T-cell (primary cell): ENCODE measurements at regions of chr17 and their contacts with region 1.

Region 1: DNA sequence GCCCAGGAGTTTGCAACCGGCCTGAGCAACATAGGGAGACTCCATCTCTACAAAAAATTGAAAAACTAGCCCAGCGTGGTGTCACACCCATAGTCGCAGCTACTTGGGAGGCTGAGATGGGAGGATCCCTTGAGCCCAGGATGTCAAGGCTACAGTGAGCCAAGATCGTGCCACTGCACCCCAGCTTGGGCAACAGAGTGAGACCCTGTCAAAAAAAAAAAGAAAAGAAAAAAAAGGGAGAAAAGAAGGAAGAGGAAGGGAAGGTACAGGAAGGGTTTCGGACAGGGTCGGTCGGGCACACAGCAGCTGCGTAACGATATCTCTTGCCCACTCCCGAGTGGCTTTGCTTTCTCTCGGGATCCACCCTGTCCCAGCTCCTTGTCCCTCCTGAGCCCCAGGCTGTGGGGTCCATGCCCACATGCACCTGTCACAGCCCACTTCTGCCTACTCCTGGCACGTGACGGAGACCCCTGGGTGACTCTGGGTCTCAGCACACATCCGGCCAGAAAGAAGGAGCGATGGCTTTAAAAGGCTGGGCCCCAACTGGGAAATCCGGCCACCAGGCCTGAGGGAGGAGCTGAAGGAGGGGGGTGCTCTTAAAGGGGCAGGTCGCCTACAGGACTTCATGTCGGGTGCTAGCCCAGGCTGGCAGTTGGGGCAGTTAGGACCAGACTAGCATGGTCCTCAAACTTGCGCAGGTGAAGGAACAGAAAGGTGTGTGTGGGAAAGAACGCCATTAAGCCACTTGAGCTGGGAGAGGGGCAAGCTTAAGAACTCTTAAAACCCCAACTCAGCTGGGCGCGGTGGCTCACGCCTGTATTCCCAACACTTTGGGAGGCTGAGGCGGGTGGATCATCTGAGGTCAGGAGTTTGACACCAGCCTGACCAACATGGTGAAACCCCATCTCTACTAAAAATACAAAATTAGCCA is at the start of gene GHDC:
- DNase-seq: peak; percentile 57 to 82 (median 69)
- ATAC-seq: peak; percentile 90 to 98 (median 94)
- H3K4me3 ChIP-seq: peak within 1 kb of the TSS; percentile 94 to 97
- H3K4me3 Mint-ChIP-seq: peak within 1 kb of the TSS; percentile 94 to 95 (median 94)
- H3K27ac ChIP-seq: peak within 1 kb of the TSS; percentile 69
- H3K27ac Mint-ChIP-seq: peak within 1 kb of the TSS; percentile 91 to 92
- H3K4me1 ChIP-seq: peaks cover 2 to 29% of the 10 kb centered on the region in 2 experiments
- H3K4me1 Mint-ChIP-seq: peaks cover 26 to 31% (median 31%) of the 10 kb centered on the region in 3 donors
- H3K27me3 ChIP-seq: no peaks in the 10 kb centered on the region
- H3K27me3 Mint-ChIP-seq: no peaks in the 10 kb centered on the region
- total RNA-seq, gene GHDC: 15.8 to 26.2 (median 22.5) TPM

Region 2: DNA sequence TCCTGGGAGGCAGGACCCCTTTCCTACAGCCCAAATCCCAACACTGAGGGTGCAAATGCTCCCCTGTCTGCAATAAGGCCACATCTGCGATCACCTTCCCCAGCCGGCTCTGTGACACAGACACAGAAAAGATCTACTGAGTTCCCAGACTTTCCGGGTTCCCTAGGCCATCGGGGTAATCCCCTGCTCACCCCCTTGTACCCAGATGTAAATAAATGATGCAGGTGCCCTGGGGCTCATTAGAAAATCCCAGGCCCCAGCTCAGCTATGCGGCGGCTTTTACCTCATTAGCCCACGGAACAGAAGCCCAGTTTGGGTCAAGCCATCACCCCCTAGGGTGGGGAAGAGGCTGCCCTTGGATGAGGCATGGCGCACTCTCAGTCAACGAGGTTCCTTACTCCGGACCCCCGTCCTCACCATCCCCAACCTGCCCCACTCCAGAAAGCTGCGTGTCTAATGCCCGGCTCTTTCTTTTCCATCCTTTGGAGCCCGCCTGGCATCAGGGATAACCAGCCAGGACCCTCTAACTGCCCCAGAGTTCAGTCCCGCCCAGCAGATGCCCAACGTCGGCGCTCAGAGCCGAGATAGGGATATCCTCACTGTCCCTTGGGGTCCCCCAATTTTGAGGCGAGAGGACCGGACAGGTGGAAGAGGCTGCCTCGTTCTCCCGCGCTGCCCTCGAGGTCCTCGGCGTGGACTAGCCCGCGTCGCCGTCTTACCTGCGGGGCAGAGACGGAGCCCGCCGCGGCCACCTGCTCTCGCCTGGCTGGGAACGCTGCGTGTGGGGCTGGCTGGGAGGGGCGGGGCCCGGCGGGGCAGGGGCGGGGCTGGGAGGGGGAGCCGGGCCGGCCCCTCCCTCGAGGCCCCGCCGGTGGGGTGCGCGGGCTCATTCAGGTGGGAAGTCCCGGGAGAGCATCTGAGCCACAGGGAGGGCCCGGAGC is 96.3 kb before region 1 on chr17 and contains the start of gene ZNF385C:
- CTCF ChIA-PET with region 1: no interaction called
- POLR2A ChIA-PET with region 1: no interaction called
- DNase-seq: peak in 21 of 35 experiments; percentile 23 to 66 (median 38)
- ATAC-seq: peak; percentile 80 to 91 (median 87)
- H3K4me3 ChIP-seq: peak within 1 kb of the TSS; percentile 33 to 46
- H3K4me3 Mint-ChIP-seq: peak within 1 kb of the TSS; percentile 50 to 66 (median 52)
- H3K27ac ChIP-seq: no peak within 1 kb of the TSS
- H3K27ac Mint-ChIP-seq: no peak within 1 kb of the TSS
- H3K4me1 ChIP-seq: peaks cover 6 to 16% of the 10 kb centered on the region in 2 experiments
- H3K4me1 Mint-ChIP-seq: peaks cover 6 to 10% (median 9%) of the 10 kb centered on the region in 3 donors
- H3K27me3 ChIP-seq: peaks cover 0 to 43% of the 10 kb centered on the region in 2 experiments
- H3K27me3 Mint-ChIP-seq: peaks cover 22 to 27% of the 10 kb centered on the region in 2 donors
- total RNA-seq, gene ZNF385C: 0.16 to 1.0 (median 0.46) TPM

Region 3: GRCh38 chr17:42210046-42210445 is 15.8 kb after region 1 on chr17:
- CTCF ChIA-PET with region 1: no interaction called
- POLR2A ChIA-PET with region 1: no interaction called
- DNase-seq: no peak
- ATAC-seq: no peak
- H3K4me3 ChIP-seq: no peak overlapping the region
- H3K4me3 Mint-ChIP-seq: no peak overlapping the region
- H3K27ac ChIP-seq: no peak overlapping the region
- H3K27ac Mint-ChIP-seq: no peak overlapping the region
- H3K4me1 ChIP-seq: no peaks in the 10 kb centered on the region
- H3K4me1 Mint-ChIP-seq: no peaks in the 10 kb centered on the region
- H3K27me3 ChIP-seq: no peaks in the 10 kb centered on the region
- H3K27me3 Mint-ChIP-seq: no peaks in the 10 kb centered on the region

Region 4: GRCh38 chr17:42266918-42267778 is 72.9 kb after region 1 on chr17:
- CTCF ChIA-PET with region 1: no interaction called
- POLR2A ChIA-PET with region 1: interaction called in 1 of 2 experiments, 15 read pairs
- DNase-seq: peak in 27 of 35 experiments; percentile 19 to 87 (median 53)
- ATAC-seq: peak; percentile 67 to 90 (median 78)
- H3K4me3 ChIP-seq: no peak overlapping the region
- H3K4me3 Mint-ChIP-seq: peak overlapping the region; percentile 24 to 29 (median 28)
- H3K27ac ChIP-seq: peak overlapping the region; percentile 83
- H3K27ac Mint-ChIP-seq: peak overlapping the region; percentile 84 to 91
- H3K4me1 ChIP-seq: peaks cover 34 to 41% of the 10 kb centered on the region in 2 experiments
- H3K4me1 Mint-ChIP-seq: peaks cover 58 to 68% (median 67%) of the 10 kb centered on the region in 3 donors
- H3K27me3 ChIP-seq: no peaks in the 10 kb centered on the region
- H3K27me3 Mint-ChIP-seq: no peaks in the 10 kb centered on the region

Region 5: DNA sequence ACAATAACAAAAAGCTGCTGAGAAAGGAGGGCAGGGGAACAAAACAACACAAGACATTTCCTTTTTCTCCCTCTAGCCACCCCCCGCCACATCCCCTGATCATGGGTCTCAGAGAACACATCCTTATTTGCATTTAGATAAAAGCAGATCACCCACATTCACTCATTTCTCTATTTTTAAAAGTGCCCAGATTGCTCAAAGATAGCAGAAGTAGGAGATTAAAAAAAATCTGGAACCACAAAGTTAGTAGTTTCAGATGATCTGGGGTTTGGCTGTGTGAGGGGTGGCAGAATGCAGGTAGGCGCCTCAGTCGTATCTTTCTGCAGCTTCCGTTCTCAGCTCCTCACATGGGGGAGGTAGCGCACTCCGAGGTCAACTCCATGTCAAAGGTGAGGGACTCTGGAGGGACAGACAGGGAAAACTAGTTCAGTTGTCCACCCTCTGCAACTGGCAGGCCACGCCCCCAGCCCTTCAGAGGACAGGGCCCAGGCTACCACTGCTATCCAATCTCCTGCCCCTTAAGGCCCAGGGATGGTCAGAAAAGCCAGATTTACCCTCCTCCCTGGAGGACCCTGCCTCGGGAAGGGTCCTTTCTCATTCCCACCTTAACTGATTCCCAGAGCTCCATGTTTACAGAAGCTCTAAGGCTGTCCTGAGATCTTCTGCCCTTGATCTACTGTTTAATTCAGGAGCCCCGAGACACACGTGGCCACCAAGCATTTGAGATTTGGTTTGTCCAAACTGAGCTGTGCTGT is 121.3 kb after region 1 on chr17:
- CTCF ChIA-PET with region 1: no interaction called
- POLR2A ChIA-PET with region 1: no interaction called
- DNase-seq: peak in 20 of 35 experiments; percentile 8 to 57 (median 30)
- ATAC-seq: peak; percentile 27 to 35 (median 33)
- H3K4me3 ChIP-seq: no peak overlapping the region
- H3K4me3 Mint-ChIP-seq: peak overlapping the region in 2 of 3 donors; percentile 35 to 77
- H3K27ac ChIP-seq: peak overlapping the region; percentile 72
- H3K27ac Mint-ChIP-seq: peak overlapping the region; percentile 92 to 95
- H3K4me1 ChIP-seq: peaks cover 67 to 79% of the 10 kb centered on the region in 2 experiments
- H3K4me1 Mint-ChIP-seq: peaks cover 78 to 87% (median 79%) of the 10 kb centered on the region in 3 donors
- H3K27me3 ChIP-seq: no peaks in the 10 kb centered on the region
- H3K27me3 Mint-ChIP-seq: no peaks in the 10 kb centered on the region